IMR-90 (cell line): ENCODE measurements at regions of chr6 and their contacts with region 1.

Region 1: DNA sequence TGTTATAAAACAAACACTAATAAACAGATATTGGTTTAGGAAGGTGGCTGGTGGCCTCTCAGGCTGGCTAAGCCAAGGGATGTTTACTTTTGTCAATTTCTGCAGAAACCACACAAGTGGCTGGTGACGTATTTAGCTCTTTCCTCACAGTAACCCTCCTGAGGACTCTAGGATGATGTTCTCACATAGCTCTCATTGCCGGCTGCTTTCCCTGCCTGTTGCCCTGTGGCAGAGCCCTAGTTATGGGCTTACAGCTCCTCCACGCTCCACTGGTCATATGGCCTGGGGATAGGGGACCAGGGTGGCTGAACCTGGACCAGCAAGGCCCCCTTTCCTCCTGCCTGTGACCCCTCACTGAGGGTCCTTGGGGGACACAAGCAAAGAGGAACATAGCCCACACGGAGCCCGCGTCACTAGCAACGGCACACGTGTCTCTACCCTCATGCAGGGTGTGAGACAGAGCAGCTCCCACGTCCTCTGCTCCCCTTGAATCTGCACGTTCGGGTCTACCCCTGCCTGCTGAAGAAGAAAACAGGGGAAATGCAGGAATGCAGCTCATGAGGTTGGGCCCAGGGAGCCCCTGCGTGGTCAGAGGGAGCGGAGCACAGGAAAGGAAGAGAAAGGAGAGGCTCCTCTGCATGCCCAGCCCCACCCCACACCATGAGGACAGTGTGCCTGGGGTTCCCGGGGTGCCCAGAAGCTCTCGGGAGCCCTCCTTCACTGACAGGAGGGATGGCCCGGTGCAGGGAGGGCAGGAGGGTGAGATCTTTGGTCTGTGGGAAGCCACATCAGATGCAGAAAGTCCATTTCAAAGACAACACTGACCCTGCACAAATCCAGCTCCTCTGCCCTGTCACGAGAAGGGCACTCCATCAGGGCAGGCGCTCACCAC is 13.9 kb downstream of the RAMACL start:
- DNase-seq: peak; percentile 98
- ATAC-seq: peak; percentile 94
- H3K4me3 ChIP-seq: no peak overlapping the region
- H3K27ac ChIP-seq: peak overlapping the region; percentile 88
- H3K4me1 ChIP-seq: peaks cover 18% of the 10 kb centered on the region
- H3K27me3 ChIP-seq: no peaks in the 10 kb centered on the region
- CTCF ChIP-seq: no peak
- POLR2A ChIP-seq: peak; percentile 73
- RAD21 ChIP-seq: peak; percentile 27

Region 2: GRCh38 chr6:166619912-166620311 is 47.3 kb after region 1 on chr6:
- CTCF ChIA-PET with region 1: interaction called, 3 read pairs
- POLR2A ChIA-PET with region 1: no interaction called
- dilution Hi-C with region 1: no loop called
- in situ Hi-C with region 1: no loop called
- intact Hi-C with region 1: loop called (anchors 2 kb)
- DNase-seq: peak; percentile 98
- ATAC-seq: peak; percentile 78
- H3K4me3 ChIP-seq: no peak overlapping the region
- H3K27ac ChIP-seq: peak overlapping the region; percentile 92; the same call in 1 of the 2 replicates
- H3K4me1 ChIP-seq: peaks cover 39% of the 10 kb centered on the region
- H3K27me3 ChIP-seq: no peaks in the 10 kb centered on the region
- CTCF ChIP-seq: no peak
- POLR2A ChIP-seq: no peak
- RAD21 ChIP-seq: peak; percentile 27; the same call in 1 of the 2 replicates

Region 3: GRCh38 chr6:167244064-167244960 is 671.7 kb after region 1 on chr6:
- CTCF ChIA-PET with region 1: no interaction called
- POLR2A ChIA-PET with region 1: no interaction called
- dilution Hi-C with region 1: no loop called
- in situ Hi-C with region 1: no loop called
- intact Hi-C with region 1: no loop called
- DNase-seq: no peak
- ATAC-seq: no peak
- H3K4me3 ChIP-seq: no peak overlapping the region
- H3K27ac ChIP-seq: no peak overlapping the region
- H3K4me1 ChIP-seq: no peaks in the 10 kb centered on the region
- H3K27me3 ChIP-seq: no peaks in the 10 kb centered on the region
- CTCF ChIP-seq: no peak
- POLR2A ChIP-seq: no peak
- RAD21 ChIP-seq: no peak